Naive thymus-derived CD4-positive, alpha-beta T cell (primary cell): ENCODE measurements at regions of chr1 and their contacts with region 1.

Region 1: DNA sequence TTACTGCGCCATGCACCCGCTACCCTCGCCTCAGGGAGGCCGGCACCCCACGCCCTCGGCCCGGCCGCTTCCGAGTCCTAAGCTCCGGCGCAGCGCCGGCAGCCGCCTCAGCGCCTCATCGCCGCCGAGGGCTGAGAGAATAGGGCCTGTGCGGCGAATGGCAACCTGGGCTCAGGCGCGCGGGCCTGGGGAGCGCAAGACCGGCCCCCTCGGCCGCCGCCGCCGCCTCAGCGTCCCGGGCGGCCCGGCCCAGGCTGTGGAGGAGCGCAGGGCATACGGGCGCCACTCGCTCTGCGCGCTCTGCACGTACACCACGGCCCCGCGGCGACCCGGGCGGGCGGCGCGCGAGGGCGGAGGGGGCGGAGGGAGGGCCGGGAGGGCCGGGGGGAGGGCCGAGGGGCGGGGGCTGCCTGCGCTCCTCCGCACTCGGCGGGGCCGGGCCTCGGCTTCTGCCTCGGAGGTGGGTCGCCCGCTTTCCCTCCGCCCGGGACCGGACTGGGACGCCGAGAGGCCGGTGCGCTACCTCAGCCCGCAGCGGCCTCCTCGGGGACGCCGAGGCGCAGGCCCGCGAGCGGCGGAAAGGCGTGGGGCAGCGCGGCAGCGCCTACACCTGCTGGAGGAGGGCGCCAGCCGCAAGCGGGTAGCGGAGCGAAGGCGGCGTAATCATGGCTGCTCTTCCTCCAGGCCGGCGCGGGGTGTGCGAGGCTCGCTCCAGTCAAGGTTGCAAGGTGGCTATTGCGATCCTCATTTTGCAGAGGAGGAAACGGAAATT is at the start of gene EGLN1:
- DNase-seq: peak; percentile 73 to 86 (median 83)
- ATAC-seq: peak; percentile 92
- H3K4me3 ChIP-seq: peak within 1 kb of the TSS; percentile 86
- H3K4me3 Mint-ChIP-seq: peak within 1 kb of the TSS; percentile 89 to 97 (median 92)
- H3K27ac ChIP-seq: peak within 1 kb of the TSS; percentile 80
- H3K27ac Mint-ChIP-seq: peak within 1 kb of the TSS; percentile 82 to 97 (median 91)
- H3K4me1 ChIP-seq: peaks cover 28 to 34% of the 10 kb centered on the region in 2 donors
- H3K4me1 Mint-ChIP-seq: peaks cover 36 to 56% (median 46%) of the 10 kb centered on the region in 7 donors
- H3K27me3 ChIP-seq: no peaks in the 10 kb centered on the region
- H3K27me3 Mint-ChIP-seq: peaks cover 0 to 32% (median 0%) of the 10 kb centered on the region in 5 donors
- total RNA-seq, gene EGLN1: 13.6 to 38.9 (median 23.0) TPM

Region 2: DNA sequence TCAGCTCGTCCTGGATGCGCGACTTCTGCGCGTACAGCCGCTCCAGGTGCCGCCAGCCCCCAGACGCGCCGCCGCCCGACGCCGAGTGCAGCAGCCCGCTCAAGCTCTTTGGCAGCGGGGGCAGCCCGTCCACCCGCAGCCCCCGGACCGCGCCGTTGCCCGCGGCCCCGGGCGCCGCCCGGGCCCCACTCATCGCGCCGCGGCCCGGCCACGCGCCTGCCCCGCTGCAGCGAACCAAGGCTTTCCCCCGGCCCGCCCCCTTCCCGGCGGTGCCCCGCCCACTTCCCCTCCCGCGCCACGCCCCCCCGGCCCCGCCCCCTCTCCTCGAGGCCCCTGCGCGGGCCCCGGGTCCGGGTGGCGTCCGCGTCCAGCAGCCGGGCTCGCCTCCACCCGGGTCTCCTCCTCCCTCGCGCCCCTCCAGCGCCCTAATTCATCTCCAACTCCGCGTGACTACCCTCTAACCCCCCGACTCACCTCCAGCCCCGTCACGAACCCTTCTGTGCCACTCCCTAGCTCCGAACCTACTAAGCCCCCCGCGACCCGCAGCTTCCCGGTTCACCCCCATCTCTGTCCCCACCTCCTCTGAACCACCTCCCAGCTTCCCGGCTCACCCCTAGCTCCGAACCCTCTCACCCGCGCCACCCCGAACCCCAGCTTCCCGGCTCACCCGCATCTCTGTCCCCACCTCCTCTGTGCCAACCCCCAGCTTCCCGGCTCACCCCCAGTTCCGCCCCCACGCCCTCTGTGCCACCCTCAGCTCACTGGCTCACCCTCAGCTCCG is 382.0 kb before region 1 on chr1 and contains the start of gene FAM89A:
- CTCF ChIA-PET with region 1: no interaction called
- POLR2A ChIA-PET with region 1: no interaction called
- intact Hi-C with region 1: loop called in 1 of 2 experiments (anchors 5 kb)
- DNase-seq: peak; percentile 44 to 79 (median 70)
- ATAC-seq: peak; percentile 91
- H3K4me3 ChIP-seq: peak within 1 kb of the TSS; percentile 67
- H3K4me3 Mint-ChIP-seq: peak within 1 kb of the TSS; percentile 81 to 90 (median 82)
- H3K27ac ChIP-seq: peak within 1 kb of the TSS; percentile 63
- H3K27ac Mint-ChIP-seq: peak within 1 kb of the TSS in 8 of 9 donors; percentile 36 to 83 (median 69)
- H3K4me1 ChIP-seq: peaks cover 10 to 13% of the 10 kb centered on the region in 2 donors
- H3K4me1 Mint-ChIP-seq: peaks cover 27 to 49% (median 36%) of the 10 kb centered on the region in 7 donors
- H3K27me3 ChIP-seq: no peaks in the 10 kb centered on the region
- H3K27me3 Mint-ChIP-seq: peaks cover 0 to 37% (median 0%) of the 10 kb centered on the region in 5 donors
- total RNA-seq, gene FAM89A: 4.5 to 9.0 (median 6.9) TPM

Region 3: GRCh38 chr1:231337472-231338269 is 84.5 kb before region 1 on chr1 and contains the start of gene EXOC8:
- CTCF ChIA-PET with region 1: no interaction called
- POLR2A ChIA-PET with region 1: interaction called, 30 read pairs
- intact Hi-C with region 1: loop called (anchors 1 kb)
- DNase-seq: peak; percentile 95 to 100 (median 98)
- ATAC-seq: peak; percentile 86
- H3K4me3 ChIP-seq: peak within 1 kb of the TSS; percentile 99
- H3K4me3 Mint-ChIP-seq: peak within 1 kb of the TSS; percentile 97 to 100 (median 99)
- H3K27ac ChIP-seq: peak within 1 kb of the TSS; percentile 94
- H3K27ac Mint-ChIP-seq: peak within 1 kb of the TSS; percentile 96 to 100 (median 100)
- H3K4me1 ChIP-seq: peaks cover 41 to 51% of the 10 kb centered on the region in 2 donors
- H3K4me1 Mint-ChIP-seq: peaks cover 36 to 83% (median 67%) of the 10 kb centered on the region in 7 donors
- H3K27me3 ChIP-seq: no peaks in the 10 kb centered on the region
- H3K27me3 Mint-ChIP-seq: peaks cover 0 to 6% (median 0%) of the 10 kb centered on the region in 5 donors
- total RNA-seq, gene EXOC8: 21.9 to 33.8 (median 28.0) TPM

Region 4: GRCh38 chr1:231376875-231377549 is 45.2 kb before region 1 on chr1:
- CTCF ChIA-PET with region 1: no interaction called
- POLR2A ChIA-PET with region 1: interaction called, 5 read pairs
- intact Hi-C with region 1: loop called (anchors 5 kb)
- DNase-seq: peak in 1 of 9 donors; percentile 29
- ATAC-seq: no peak
- H3K4me3 ChIP-seq: no peak overlapping the region
- H3K4me3 Mint-ChIP-seq: peak overlapping the region in 3 of 10 donors; percentile 5 to 47 (median 20)
- H3K27ac ChIP-seq: no peak overlapping the region
- H3K27ac Mint-ChIP-seq: peak overlapping the region in 8 of 9 donors; percentile 6 to 60 (median 24)
- H3K4me1 ChIP-seq: peaks cover 7 to 8% of the 10 kb centered on the region in 2 donors
- H3K4me1 Mint-ChIP-seq: peaks cover 35 to 59% (median 48%) of the 10 kb centered on the region in 7 donors
- H3K27me3 ChIP-seq: no peaks in the 10 kb centered on the region
- H3K27me3 Mint-ChIP-seq: no peaks in the 10 kb centered on the region

Region 5: GRCh38 chr1:231460614-231461013 is 38.4 kb after region 1 on chr1:
- CTCF ChIA-PET with region 1: no interaction called
- POLR2A ChIA-PET with region 1: no interaction called
- intact Hi-C with region 1: loop called in 1 of 2 experiments (anchors 1 kb)
- DNase-seq: peak in 8 of 9 donors; percentile 43 to 71 (median 60)
- ATAC-seq: peak; percentile 93
- H3K4me3 ChIP-seq: no peak overlapping the region
- H3K4me3 Mint-ChIP-seq: peak overlapping the region in 3 of 10 donors; percentile 10 to 38 (median 16)
- H3K27ac ChIP-seq: no peak overlapping the region
- H3K27ac Mint-ChIP-seq: peak overlapping the region in 2 of 9 donors; percentile 5 to 71
- H3K4me1 ChIP-seq: peaks cover 8 to 18% of the 10 kb centered on the region in 2 donors
- H3K4me1 Mint-ChIP-seq: peaks cover 10 to 29% (median 16%) of the 10 kb centered on the region in 7 donors
- H3K27me3 ChIP-seq: peaks cover 12 to 13% of the 10 kb centered on the region in 2 donors
- H3K27me3 Mint-ChIP-seq: peaks cover 64 to 81% (median 71%) of the 10 kb centered on the region in 5 donors

Region 6: GRCh38 chr1:231590453-231591198 is 168.4 kb after region 1 on chr1:
- CTCF ChIA-PET with region 1: interaction called, 4 read pairs
- POLR2A ChIA-PET with region 1: no interaction called
- intact Hi-C with region 1: loop called in 1 of 2 experiments (anchors 1 kb)
- DNase-seq: peak in 5 of 9 donors; percentile 24 to 43 (median 31)
- ATAC-seq: peak; percentile 83
- H3K4me3 ChIP-seq: no peak overlapping the region
- H3K4me3 Mint-ChIP-seq: no peak overlapping the region
- H3K27ac ChIP-seq: no peak overlapping the region
- H3K27ac Mint-ChIP-seq: no peak overlapping the region
- H3K4me1 ChIP-seq: no peaks in the 10 kb centered on the region
- H3K4me1 Mint-ChIP-seq: peaks cover 3 to 10% (median 6%) of the 10 kb centered on the region in 7 donors
- H3K27me3 ChIP-seq: no peaks in the 10 kb centered on the region
- H3K27me3 Mint-ChIP-seq: peaks cover 0 to 6% (median 0%) of the 10 kb centered on the region in 5 donors

Region 7: GRCh38 chr1:231612393-231613089 is 190.4 kb after region 1 on chr1:
- CTCF ChIA-PET with region 1: no interaction called
- POLR2A ChIA-PET with region 1: interaction called, 5 read pairs
- intact Hi-C with region 1: loop called in 1 of 2 experiments (anchors 2 kb)
- DNase-seq: peak; percentile 20 to 79 (median 67)
- ATAC-seq: peak; percentile 96
- H3K4me3 ChIP-seq: peak overlapping the region; percentile 34
- H3K4me3 Mint-ChIP-seq: peak overlapping the region; percentile 56 to 82 (median 74)
- H3K27ac ChIP-seq: peak overlapping the region; percentile 59
- H3K27ac Mint-ChIP-seq: peak overlapping the region; percentile 79 to 94 (median 90)
- H3K4me1 ChIP-seq: peaks cover 41 to 45% of the 10 kb centered on the region in 2 donors
- H3K4me1 Mint-ChIP-seq: peaks cover 53 to 70% (median 63%) of the 10 kb centered on the region in 7 donors
- H3K27me3 ChIP-seq: no peaks in the 10 kb centered on the region
- H3K27me3 Mint-ChIP-seq: peaks cover 0 to 14% (median 0%) of the 10 kb centered on the region in 5 donors